ENCODE measurements at regions of chr6 and their contacts with region 1.

Region 1: DNA sequence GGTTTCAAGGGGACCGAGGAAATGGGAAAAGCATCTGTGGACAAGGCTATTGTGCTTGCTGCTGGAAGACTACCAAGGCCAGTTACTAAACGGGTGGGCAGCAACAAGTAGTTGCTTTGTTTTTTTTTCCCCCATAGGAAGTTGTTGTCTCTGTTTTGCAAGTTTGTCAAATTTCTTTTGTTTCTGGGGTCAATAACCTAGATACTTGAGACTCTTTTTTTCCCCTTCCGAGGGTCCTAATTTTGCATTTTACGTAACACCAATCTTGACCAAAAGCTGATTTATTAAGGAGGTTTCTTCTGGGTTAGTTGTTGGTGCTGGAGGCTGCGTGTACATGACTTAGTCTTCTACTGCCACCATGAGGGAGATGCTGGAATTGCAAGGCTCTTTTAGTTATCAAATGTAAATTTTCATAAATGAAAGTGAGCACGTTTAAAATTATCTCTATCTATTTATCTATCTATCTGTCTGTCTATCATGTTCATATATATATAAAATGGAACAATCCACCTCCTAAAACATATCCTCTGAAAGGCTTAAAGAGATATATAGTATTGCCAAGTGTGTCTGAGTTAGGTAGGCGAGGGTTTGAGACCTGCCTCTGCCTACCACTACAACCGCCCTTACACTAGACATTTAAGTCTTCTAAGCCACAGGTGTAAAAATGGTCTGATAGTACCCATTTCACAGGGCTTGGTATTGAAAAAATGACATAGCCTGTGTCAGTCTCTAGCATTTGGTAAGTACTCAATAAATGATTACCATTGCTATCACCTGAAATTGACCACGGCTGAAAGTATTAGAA is 60.2 kb downstream of the GCLC start:
- DNase-seq: no peak
- H3K4me3 ChIP-seq: no peak overlapping the region
- CTCF ChIP-seq: peak; percentile 66

Region 2: GRCh38 chr6:53080813-53081212 is 403.9 kb before region 1 on chr6:
- CTCF ChIA-PET with region 1: interaction called, 10 read pairs
- POLR2A ChIA-PET with region 1: no interaction called
- DNase-seq: no peak
- H3K4me3 ChIP-seq: no peak overlapping the region
- CTCF ChIP-seq: no peak

Measured in AG04449 (cell line).